CD8-positive, alpha-beta T cell (primary cell): ENCODE measurements at regions of chr12 and their contacts with region 1.

Region 1: DNA sequence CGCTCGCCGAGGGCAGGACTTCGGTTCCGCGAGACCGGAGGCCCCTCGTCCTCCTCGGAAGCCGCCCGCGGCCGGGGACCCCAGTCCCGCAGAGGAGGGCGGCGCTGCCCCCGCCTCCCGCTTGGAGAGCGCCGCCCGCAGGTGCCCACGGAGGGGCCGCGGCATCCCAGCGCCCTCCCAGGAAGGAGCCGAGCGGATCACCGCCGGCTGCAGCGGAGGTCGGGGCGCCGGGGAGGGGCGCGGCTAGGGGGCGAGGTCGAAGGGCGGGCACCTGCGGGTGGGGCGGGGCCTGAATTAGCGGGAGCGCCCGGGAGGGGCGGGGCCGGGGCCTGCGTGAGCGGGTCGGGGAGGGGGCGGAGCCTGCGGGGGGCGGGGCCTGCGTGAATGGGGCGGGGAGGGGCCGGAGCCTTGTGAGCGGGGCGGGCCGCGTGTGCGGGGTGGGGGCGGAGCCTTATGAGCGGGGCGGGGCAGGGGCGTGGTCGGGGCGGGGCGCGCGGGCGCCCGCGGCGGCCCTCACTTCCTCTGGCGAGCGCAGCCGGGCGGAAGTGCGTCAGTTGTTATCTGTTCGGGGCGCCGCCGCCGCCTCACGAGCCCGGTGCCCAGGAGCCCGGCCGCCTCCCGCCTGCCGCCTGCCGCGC is at the start of gene FBRSL1:
- DNase-seq: peak; percentile 85 to 97 (median 94)
- ATAC-seq: peak; percentile 77
- H3K4me3 ChIP-seq: peak within 1 kb of the TSS; percentile 61 to 95
- H3K4me3 Mint-ChIP-seq: peak within 1 kb of the TSS; percentile 89
- H3K27ac ChIP-seq: peak within 1 kb of the TSS; percentile 85 to 87
- H3K27ac Mint-ChIP-seq: peak within 1 kb of the TSS; percentile 96
- H3K4me1 ChIP-seq: peaks cover 66% of the 10 kb centered on the region
- H3K4me1 Mint-ChIP-seq: peaks cover 69% of the 10 kb centered on the region
- H3K27me3 ChIP-seq: no peaks in the 10 kb centered on the region
- H3K27me3 Mint-ChIP-seq: no peaks in the 10 kb centered on the region
- CTCF ChIP-seq: no peak
- total RNA-seq, gene FBRSL1: 78.5 to 82.0 TPM

Region 2: GRCh38 chr12:131882779-131883520 is 606.8 kb before region 1 on chr12:
- CTCF ChIA-PET with region 1: no interaction called
- POLR2A ChIA-PET with region 1: no interaction called
- intact Hi-C with region 1: no loop called
- DNase-seq: no peak
- ATAC-seq: no peak
- H3K4me3 ChIP-seq: no peak overlapping the region
- H3K4me3 Mint-ChIP-seq: no peak overlapping the region
- H3K27ac ChIP-seq: no peak overlapping the region
- H3K27ac Mint-ChIP-seq: no peak overlapping the region
- H3K4me1 ChIP-seq: no peaks in the 10 kb centered on the region
- H3K4me1 Mint-ChIP-seq: no peaks in the 10 kb centered on the region
- H3K27me3 ChIP-seq: no peaks in the 10 kb centered on the region
- H3K27me3 Mint-ChIP-seq: no peaks in the 10 kb centered on the region
- CTCF ChIP-seq: no peak

Region 3: DNA sequence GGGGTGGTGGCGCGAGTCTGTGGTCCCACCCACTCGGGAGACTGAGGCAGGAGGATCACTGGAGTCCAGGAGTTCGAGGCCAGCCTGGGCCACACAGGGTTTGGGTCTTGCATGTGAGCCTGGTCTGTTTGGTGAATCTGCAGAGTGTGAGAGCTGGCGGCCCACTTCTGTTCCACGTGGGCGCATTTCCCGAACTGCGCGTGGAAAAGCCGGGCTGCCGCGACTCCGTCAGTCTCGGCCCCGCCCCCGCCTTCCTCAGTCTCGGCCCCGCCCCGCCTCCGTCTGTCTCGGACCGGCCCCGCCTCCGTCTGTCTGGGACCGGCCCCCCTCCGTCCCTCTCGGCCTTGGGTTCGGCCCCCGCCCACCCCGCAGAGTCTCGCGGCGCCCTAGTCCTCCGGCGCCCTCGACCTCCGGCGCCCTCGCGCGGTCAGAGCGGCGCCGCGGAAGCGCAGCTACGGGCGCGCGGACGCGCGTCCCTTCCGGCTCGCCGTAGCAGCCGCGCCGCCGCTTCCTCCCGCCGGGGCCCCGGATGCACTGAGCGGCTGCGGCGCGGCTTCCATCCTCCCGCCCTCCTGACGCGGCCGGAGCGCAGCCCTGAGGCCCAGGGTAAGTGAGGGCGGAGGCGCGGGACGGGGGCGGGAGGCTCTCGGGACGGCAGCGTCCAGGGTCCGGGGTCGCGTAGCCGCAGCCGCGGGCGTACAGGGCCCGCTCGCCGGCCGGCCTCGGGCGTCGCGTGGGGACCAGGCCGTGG is 540.1 kb before region 1 on chr12 and contains the start of gene EP400:
- CTCF ChIA-PET with region 1: no interaction called
- POLR2A ChIA-PET with region 1: no interaction called
- intact Hi-C with region 1: loop called in 1 of 2 experiments (anchors 2 kb)
- DNase-seq: peak; percentile 87 to 98 (median 95)
- ATAC-seq: peak; percentile 91
- H3K4me3 ChIP-seq: peak within 1 kb of the TSS; percentile 81 to 84
- H3K4me3 Mint-ChIP-seq: peak within 1 kb of the TSS; percentile 91
- H3K27ac ChIP-seq: peak within 1 kb of the TSS; percentile 59 to 73
- H3K27ac Mint-ChIP-seq: peak within 1 kb of the TSS; percentile 90
- H3K4me1 ChIP-seq: peaks cover 34% of the 10 kb centered on the region
- H3K4me1 Mint-ChIP-seq: peaks cover 42% of the 10 kb centered on the region
- H3K27me3 ChIP-seq: no peaks in the 10 kb centered on the region
- H3K27me3 Mint-ChIP-seq: no peaks in the 10 kb centered on the region
- CTCF ChIP-seq: no peak
- total RNA-seq, gene EP400: 53.1 to 53.9 TPM

Region 4: GRCh38 chr12:132414634-132415326 is 74.9 kb before region 1 on chr12:
- CTCF ChIA-PET with region 1: no interaction called
- POLR2A ChIA-PET with region 1: interaction called, 3 read pairs
- intact Hi-C with region 1: loop called in 1 of 2 experiments (anchors 1 kb)
- DNase-seq: peak; percentile 47 to 87 (median 74)
- ATAC-seq: peak; percentile 93
- H3K4me3 ChIP-seq: no peak overlapping the region
- H3K4me3 Mint-ChIP-seq: no peak overlapping the region
- H3K27ac ChIP-seq: no peak overlapping the region
- H3K27ac Mint-ChIP-seq: no peak overlapping the region
- H3K4me1 ChIP-seq: peaks cover 14% of the 10 kb centered on the region
- H3K4me1 Mint-ChIP-seq: no peaks in the 10 kb centered on the region
- H3K27me3 ChIP-seq: peaks cover 0 to 11% of the 10 kb centered on the region in 2 experiments
- H3K27me3 Mint-ChIP-seq: no peaks in the 10 kb centered on the region
- CTCF ChIP-seq: peak; percentile 72

Region 5: DNA sequence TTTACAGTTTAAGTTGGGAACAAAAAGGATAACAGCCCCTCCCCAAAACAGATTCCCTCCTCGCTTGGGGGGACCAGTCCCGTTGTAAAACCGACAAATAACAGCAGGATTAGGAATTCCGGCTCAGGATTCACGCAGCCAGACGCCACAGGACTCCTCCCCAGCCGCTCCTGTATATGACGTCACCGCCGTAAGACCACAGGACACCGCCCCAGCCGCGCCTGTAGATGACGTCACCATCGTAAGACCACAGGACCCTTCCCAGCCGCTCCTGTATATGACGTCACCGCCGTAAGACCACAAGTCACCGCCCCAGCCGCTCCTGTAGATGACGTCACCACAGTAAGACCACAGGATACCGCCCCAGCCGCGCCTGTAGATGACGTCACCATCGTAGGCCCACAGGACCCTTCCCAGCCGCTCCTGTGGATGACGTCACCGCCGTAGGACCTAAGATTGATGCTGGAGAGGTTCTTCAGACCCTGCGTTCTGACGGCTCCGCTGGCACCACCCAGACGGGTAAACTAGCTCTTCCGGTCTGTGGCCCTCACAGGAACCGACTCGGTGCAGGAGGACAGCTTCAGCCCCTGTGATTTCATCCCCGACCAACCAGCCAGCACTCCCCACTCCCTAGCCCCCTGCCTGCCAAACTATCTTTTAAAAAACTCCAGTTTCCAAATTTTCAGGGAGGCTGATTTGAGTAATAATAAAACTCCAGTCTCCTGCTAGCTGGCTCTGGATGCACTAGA is 43.7 kb before region 1 on chr12:
- CTCF ChIA-PET with region 1: interaction called, 3 read pairs
- POLR2A ChIA-PET with region 1: interaction called, 3 read pairs
- intact Hi-C with region 1: loop called (anchors 1 kb)
- DNase-seq: peak in 8 of 9 experiments; percentile 17 to 89 (median 72)
- ATAC-seq: peak; percentile 50
- H3K4me3 ChIP-seq: peak overlapping the region; percentile 41 to 53
- H3K4me3 Mint-ChIP-seq: peak overlapping the region; percentile 84
- H3K27ac ChIP-seq: peak overlapping the region; percentile 91 to 95
- H3K27ac Mint-ChIP-seq: peak overlapping the region; percentile 99
- H3K4me1 ChIP-seq: peaks cover 85% of the 10 kb centered on the region
- H3K4me1 Mint-ChIP-seq: peaks cover 57% of the 10 kb centered on the region
- H3K27me3 ChIP-seq: no peaks in the 10 kb centered on the region
- H3K27me3 Mint-ChIP-seq: no peaks in the 10 kb centered on the region
- CTCF ChIP-seq: no peak

Region 6: GRCh38 chr12:132506328-132507160 is 16.8 kb after region 1 on chr12:
- CTCF ChIA-PET with region 1: no interaction called
- POLR2A ChIA-PET with region 1: interaction called, 3 read pairs
- intact Hi-C with region 1: loop called (anchors 2 kb)
- DNase-seq: peak; percentile 21 to 73 (median 62)
- ATAC-seq: peak; percentile 83
- H3K4me3 ChIP-seq: peak overlapping the region in 1 of 2 experiments; percentile 52
- H3K4me3 Mint-ChIP-seq: peak overlapping the region; percentile 64
- H3K27ac ChIP-seq: peak overlapping the region; percentile 45 to 54
- H3K27ac Mint-ChIP-seq: peak overlapping the region; percentile 72
- H3K4me1 ChIP-seq: peaks cover 61% of the 10 kb centered on the region
- H3K4me1 Mint-ChIP-seq: peaks cover 50% of the 10 kb centered on the region
- H3K27me3 ChIP-seq: peaks cover 0 to 3% of the 10 kb centered on the region in 2 experiments
- H3K27me3 Mint-ChIP-seq: no peaks in the 10 kb centered on the region
- CTCF ChIP-seq: no peak

Region 7: DNA sequence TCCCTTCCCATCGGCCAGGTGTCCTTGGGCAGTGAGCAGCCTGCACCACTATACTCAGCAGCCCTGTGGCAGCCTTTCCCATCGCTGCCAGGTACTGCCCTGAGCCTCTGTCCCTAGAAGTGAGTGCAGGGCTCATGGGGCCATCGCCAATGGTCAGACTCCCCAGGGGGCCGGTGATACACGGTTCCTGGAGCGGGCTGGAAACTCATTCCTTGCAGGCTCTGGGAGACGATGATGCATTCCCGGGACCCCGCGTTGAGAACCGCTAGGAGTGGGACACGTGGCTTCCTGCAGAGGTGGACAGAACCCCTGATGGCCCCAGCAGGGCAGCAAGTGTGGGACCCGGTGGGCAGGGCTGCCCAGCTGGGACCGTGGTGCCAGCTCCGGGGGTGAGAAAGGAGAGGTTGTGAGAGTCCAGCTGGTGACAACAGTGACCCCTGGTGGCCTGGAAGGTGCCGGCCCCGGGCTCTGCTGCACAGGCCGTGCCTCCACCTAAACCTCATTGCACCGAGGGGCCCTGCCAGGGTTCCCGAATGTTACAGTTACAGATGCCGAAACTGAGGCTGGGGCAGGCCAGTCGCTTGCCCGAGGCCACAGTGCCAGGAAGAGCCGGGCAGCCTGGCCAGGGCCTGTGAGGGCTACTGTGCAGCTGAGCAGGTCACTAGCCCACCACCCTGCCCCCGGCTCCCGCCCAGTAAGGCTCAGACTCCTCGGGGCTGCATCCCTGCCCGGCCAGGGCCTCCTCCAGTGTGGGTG is 34.0 kb after region 1 on chr12:
- CTCF ChIA-PET with region 1: no interaction called
- POLR2A ChIA-PET with region 1: no interaction called
- intact Hi-C with region 1: no loop called
- DNase-seq: peak; percentile 54 to 86 (median 74)
- ATAC-seq: peak; percentile 71
- H3K4me3 ChIP-seq: no peak overlapping the region
- H3K4me3 Mint-ChIP-seq: no peak overlapping the region
- H3K27ac ChIP-seq: no peak overlapping the region
- H3K27ac Mint-ChIP-seq: no peak overlapping the region
- H3K4me1 ChIP-seq: peaks cover 8% of the 10 kb centered on the region
- H3K4me1 Mint-ChIP-seq: peaks cover 12% of the 10 kb centered on the region
- H3K27me3 ChIP-seq: no peaks in the 10 kb centered on the region
- H3K27me3 Mint-ChIP-seq: no peaks in the 10 kb centered on the region
- CTCF ChIP-seq: peak; percentile 78

Region 8: DNA sequence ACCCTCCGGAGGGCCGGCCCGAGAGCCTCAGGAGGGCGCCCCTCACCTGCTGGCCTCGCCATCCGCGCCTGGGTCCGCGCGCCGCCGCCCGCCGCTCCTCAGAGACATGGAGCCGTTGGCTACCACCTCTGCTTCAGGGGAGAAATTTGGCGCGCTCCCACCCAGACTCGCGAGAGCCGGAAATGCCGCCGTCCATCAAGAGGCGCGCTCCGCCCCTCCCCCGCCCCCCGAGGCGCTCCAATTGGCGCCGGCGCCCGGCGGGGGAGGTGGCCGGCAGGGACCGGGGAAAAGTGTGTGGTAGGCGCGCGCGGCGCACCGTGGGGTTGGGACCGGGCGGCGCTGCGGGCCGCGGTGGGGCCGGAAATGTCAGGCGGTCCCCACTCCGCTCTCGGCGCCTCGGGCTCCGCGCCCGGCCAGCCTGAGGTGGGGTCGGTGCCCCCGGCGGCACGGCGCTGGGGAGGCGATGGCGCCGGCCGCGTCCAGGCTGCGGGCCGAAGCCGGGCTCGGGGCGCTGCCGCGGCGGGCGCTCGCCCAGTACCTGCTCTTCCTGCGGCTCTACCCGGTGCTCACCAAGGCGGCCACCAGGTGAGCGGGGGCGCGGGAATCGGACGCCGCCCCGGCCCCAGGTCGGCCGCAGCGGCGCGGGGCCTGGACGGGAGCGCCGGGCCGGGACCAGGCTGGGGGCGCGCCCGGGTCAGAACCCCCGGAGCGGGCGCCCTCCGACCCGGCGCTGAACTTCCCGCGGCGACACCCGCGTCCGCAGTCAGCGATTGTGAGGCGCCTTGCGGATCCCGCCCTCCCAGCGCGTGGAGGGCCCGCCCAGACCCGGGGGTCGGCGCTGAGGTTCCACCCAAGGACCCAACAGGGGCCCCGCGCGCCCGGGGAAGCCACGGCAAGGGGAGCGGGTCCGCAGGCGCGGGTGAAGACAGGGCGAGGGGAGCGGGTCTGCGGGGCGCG is 197.8 kb after region 1 on chr12 and contains the starts of genes POLE and PXMP2:
- CTCF ChIA-PET with region 1: no interaction called
- POLR2A ChIA-PET with region 1: no interaction called
- intact Hi-C with region 1: loop called in 1 of 2 experiments (anchors 2 kb)
- DNase-seq: peak; percentile 88 to 98 (median 94)
- ATAC-seq: peak; percentile 95
- H3K4me3 ChIP-seq: peak within 1 kb of the TSS; percentile 38 to 58
- H3K4me3 Mint-ChIP-seq: peak within 1 kb of the TSS; percentile 82
- H3K27ac ChIP-seq: peak within 1 kb of the TSS in 1 of 2 experiments; percentile 27
- H3K27ac Mint-ChIP-seq: peak within 1 kb of the TSS; percentile 55
- H3K4me1 ChIP-seq: peaks cover 7% of the 10 kb centered on the region
- H3K4me1 Mint-ChIP-seq: peaks cover 14% of the 10 kb centered on the region
- H3K27me3 ChIP-seq: no peaks in the 10 kb centered on the region
- H3K27me3 Mint-ChIP-seq: no peaks in the 10 kb centered on the region
- CTCF ChIP-seq: no peak
- total RNA-seq, gene POLE: 25.9 to 31.1 TPM
- total RNA-seq, gene PXMP2: 1.2 to 1.8 TPM